GM12878 (cell line): ENCODE measurements at regions of chr20 and their contacts with region 1.

Region 1: DNA sequence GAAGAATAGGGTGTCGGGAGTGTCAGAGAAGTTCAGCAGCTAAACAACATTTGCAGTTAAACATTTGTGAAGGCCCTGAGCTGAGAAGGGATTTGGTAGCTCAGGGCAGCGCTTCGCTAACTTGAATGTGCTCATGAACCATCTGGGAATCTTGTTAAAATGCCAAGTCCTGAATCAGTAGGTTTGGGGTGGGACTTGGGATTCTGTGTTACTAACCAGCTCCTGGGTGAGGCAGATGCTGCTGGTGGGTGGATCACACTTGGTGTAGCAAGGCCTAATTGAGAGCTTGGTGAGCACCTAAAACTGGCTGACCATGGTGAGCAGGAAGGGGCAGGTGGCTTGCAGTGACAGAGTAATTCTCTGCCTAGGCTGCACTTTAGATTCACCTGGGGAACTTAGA is 5.9 kb downstream of the PTPRA start:
- DNase-seq: no peak
- ATAC-seq: no peak; the same call in 2 of the 3 replicates
- H3K4me3 ChIP-seq: no peak overlapping the region
- H3K27ac ChIP-seq: no peak overlapping the region
- H3K4me1 ChIP-seq: peaks cover 10% of the 10 kb centered on the region
- H3K27me3 ChIP-seq: no peaks in the 10 kb centered on the region
- CTCF ChIP-seq: no peak
- EP300 ChIP-seq: no peak
- POLR2A ChIP-seq: no peak
- RAD21 ChIP-seq: no peak

Region 2: DNA sequence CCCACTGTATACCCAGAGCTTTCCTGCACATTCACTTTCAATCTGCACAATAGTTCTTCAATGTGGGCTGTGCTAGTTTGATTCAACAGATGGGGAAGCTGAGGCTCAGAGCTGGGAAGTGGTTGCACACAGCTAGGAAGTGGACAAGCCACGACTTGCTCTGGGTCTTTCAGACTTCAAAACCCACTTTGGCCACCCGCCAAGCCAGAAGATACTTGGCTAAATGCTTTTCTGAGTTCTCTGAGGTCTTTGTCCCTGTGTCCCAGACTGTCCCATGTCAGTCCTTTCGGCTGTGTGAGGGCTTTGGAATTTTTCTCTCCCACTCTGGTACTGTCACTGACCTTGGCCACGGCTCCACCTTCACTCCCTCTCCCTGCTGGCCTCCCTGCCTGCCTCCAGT is 895.8 kb before region 1 on chr20:
- CTCF ChIA-PET with region 1: no interaction called
- POLR2A ChIA-PET with region 1: no interaction called
- RAD21 ChIA-PET with region 1: no interaction called
- SMC1A ChIA-PET with region 1: no interaction called
- in situ Hi-C with region 1: no loop called
- intact Hi-C with region 1: no loop called
- DNase-seq: no peak
- ATAC-seq: no peak
- H3K4me3 ChIP-seq: no peak overlapping the region
- H3K27ac ChIP-seq: no peak overlapping the region
- H3K4me1 ChIP-seq: no peaks in the 10 kb centered on the region
- H3K27me3 ChIP-seq: peaks cover 1 to 10% of the 10 kb centered on the region in 2 experiments; a peak in 3 of 4 replicates
- CTCF ChIP-seq: no peak
- EP300 ChIP-seq: no peak
- POLR2A ChIP-seq: no peak
- RAD21 ChIP-seq: no peak

Region 3: DNA sequence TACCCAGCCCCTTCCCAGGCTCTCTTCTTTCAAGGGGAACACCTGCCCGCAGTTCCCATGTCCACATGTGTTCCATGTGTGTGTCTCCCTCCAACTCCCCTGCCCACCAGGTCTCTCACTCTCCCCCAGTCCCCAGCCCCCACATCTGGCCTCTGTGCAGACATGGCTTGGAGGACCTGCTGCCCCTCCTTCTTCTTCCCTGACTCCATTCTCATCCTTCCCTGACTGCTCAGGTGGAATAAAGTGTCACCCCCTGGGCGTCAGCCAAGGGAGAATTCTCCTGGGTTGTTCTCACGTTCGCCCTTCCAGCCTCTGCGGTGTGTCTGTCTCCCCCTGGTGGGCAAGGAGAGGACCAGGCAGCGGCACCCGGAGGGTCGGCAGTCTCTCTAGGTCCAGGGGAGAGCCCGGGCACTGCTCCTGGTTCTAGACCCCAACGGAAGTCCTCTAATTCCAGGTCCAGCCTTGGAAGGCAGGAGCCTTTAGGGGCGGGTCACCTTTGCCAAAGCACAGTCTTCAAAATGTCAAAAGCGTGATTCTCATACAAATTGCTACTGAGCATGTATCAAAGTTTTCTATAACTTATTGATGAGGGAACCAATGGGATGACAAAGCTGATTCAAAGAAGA is 136.1 kb before region 1 on chr20:
- CTCF ChIA-PET with region 1: no interaction called
- POLR2A ChIA-PET with region 1: no interaction called
- RAD21 ChIA-PET with region 1: no interaction called
- SMC1A ChIA-PET with region 1: no interaction called
- in situ Hi-C with region 1: no loop called
- intact Hi-C with region 1: no loop called
- DNase-seq: no peak
- ATAC-seq: peak; percentile 96
- H3K4me3 ChIP-seq: no peak overlapping the region
- H3K27ac ChIP-seq: no peak overlapping the region
- H3K4me1 ChIP-seq: no peaks in the 10 kb centered on the region
- H3K27me3 ChIP-seq: no peaks in the 10 kb centered on the region; a peak in 2 of 4 replicates
- CTCF ChIP-seq: peak; percentile 84 to 95 (median 90)
- EP300 ChIP-seq: no peak
- POLR2A ChIP-seq: no peak
- RAD21 ChIP-seq: peak; percentile 62

Region 4: GRCh38 chr20:2890742-2891141 is 11.6 kb after region 1 on chr20:
- CTCF ChIA-PET with region 1: interaction called, 3 read pairs
- POLR2A ChIA-PET with region 1: no interaction called
- RAD21 ChIA-PET with region 1: no interaction called
- SMC1A ChIA-PET with region 1: interaction called, 15 read pairs
- in situ Hi-C with region 1: no loop called
- intact Hi-C with region 1: no loop called
- DNase-seq: no peak
- ATAC-seq: no peak
- H3K4me3 ChIP-seq: no peak overlapping the region
- H3K27ac ChIP-seq: no peak overlapping the region
- H3K4me1 ChIP-seq: peaks cover 3% of the 10 kb centered on the region
- H3K27me3 ChIP-seq: no peaks in the 10 kb centered on the region
- CTCF ChIP-seq: no peak
- EP300 ChIP-seq: no peak
- POLR2A ChIP-seq: no peak
- RAD21 ChIP-seq: no peak

Region 5: DNA sequence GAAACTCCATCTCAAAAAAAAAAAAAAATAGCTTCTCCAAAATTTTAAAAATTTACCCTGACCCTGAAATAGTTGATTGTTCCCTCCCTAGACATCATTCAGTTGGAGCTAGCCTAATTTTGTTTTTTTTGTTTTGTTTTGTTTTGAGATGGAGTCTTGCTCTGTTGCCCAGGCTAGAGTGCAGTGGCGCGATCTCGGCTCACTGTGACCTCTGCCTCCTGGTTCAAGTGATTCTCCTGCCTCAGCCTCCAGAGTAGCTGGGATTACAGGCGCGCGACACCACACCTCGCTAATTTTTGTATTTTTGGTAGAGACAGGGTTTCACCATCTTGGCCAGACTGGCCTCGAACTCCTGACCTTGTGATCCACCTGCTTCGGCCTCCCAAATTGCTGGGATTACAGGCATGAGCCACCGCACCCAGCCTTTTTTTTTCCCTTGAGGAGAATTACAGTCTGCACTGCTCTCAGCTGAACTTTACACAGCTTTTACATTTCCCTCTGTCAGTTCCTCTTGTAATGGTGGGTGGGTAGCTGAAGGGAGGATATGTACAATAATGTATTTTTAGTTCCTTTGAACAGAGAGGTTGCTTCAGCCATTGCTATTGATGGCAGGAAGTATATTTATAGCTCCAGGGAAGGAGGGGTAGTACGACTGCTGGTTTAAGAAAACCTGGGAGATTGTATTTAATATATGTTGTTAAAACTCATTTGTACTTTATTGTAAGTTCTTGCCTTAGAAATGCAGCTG is 21.9 kb after region 1 on chr20:
- CTCF ChIA-PET with region 1: interaction called, 3 read pairs
- POLR2A ChIA-PET with region 1: interaction called, 4 read pairs
- RAD21 ChIA-PET with region 1: interaction called, 10 read pairs
- SMC1A ChIA-PET with region 1: interaction called, 11 read pairs
- in situ Hi-C with region 1: no loop called
- intact Hi-C with region 1: no loop called
- DNase-seq: peak; percentile 24
- ATAC-seq: peak; percentile 73
- H3K4me3 ChIP-seq: 0 out of 2 replicates have a peak overlapping the region, but pooled peaks have one; percentile 11
- H3K27ac ChIP-seq: peak overlapping the region; percentile 51
- H3K4me1 ChIP-seq: peaks cover 27% of the 10 kb centered on the region
- H3K27me3 ChIP-seq: no peaks in the 10 kb centered on the region
- CTCF ChIP-seq: no peak
- EP300 ChIP-seq: no peak
- POLR2A ChIP-seq: no peak
- RAD21 ChIP-seq: no peak